Naive thymus-derived CD4-positive, alpha-beta T cell (primary cell): ENCODE measurements at regions of chr1 and their contacts with region 1.

Region 1: DNA sequence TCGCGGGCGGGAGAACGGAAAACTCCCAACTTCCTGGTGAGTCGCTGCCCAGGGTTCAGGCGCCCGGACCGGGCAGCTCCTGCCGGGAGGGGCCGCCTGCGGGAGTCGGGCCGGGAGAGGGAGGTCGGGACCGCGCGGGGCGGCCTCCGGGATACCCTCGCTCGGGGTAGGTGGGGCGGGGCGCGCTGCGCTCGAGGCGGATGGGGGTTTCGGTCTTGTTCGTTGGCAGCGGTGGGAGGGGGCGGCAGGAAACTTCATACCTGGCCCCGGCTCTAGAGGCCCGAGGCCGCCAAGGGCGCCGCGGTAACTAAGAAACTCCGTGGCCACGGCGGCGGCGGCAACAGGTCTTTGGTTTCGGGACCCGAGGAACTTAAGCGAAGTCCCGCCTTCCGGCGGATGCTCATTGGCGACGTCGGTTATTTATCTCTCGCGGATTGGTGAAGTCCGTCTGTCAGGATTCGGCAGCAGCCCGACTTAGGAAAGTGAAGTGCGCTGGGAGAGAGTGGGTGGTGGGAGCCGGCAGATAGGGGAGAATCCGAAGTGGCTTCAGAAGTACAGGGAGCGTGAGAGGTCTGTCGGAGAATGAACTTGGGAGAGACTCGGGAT is 546 bp downstream of the NEK7 start:
- DNase-seq: peak; percentile 63 to 81 (median 79)
- ATAC-seq: peak; percentile 65
- H3K4me3 ChIP-seq: peak overlapping the region; percentile 99
- H3K4me3 Mint-ChIP-seq: peak overlapping the region; percentile 97 to 100 (median 100)
- H3K27ac ChIP-seq: peak overlapping the region; percentile 96
- H3K27ac Mint-ChIP-seq: peak overlapping the region; percentile 97 to 100 (median 99)
- H3K4me1 ChIP-seq: peaks cover 28 to 33% of the 10 kb centered on the region in 2 donors
- H3K4me1 Mint-ChIP-seq: peaks cover 26 to 53% (median 48%) of the 10 kb centered on the region in 7 donors
- H3K27me3 ChIP-seq: no peaks in the 10 kb centered on the region
- H3K27me3 Mint-ChIP-seq: no peaks in the 10 kb centered on the region

Region 2: GRCh38 chr1:197391303-197392226 is 765.8 kb before region 1 on chr1:
- CTCF ChIA-PET with region 1: no interaction called
- POLR2A ChIA-PET with region 1: no interaction called
- intact Hi-C with region 1: loop called in 1 of 2 experiments (anchors 1 kb)
- DNase-seq: peak in 7 of 9 donors; percentile 63 to 89 (median 82)
- ATAC-seq: peak; percentile 95
- H3K4me3 ChIP-seq: no peak overlapping the region
- H3K4me3 Mint-ChIP-seq: peak overlapping the region in 9 of 10 donors; percentile 28 to 72 (median 68)
- H3K27ac ChIP-seq: peak overlapping the region; percentile 45
- H3K27ac Mint-ChIP-seq: peak overlapping the region; percentile 65 to 93 (median 88)
- H3K4me1 ChIP-seq: peaks cover 0 to 28% of the 10 kb centered on the region in 2 donors
- H3K4me1 Mint-ChIP-seq: peaks cover 18 to 56% (median 46%) of the 10 kb centered on the region in 7 donors
- H3K27me3 ChIP-seq: no peaks in the 10 kb centered on the region
- H3K27me3 Mint-ChIP-seq: peaks cover 0 to 20% (median 0%) of the 10 kb centered on the region in 5 donors

Region 3: GRCh38 chr1:197902454-197903195 is 254.7 kb before region 1 on chr1 and contains the start of gene C1orf53:
- CTCF ChIA-PET with region 1: no interaction called
- POLR2A ChIA-PET with region 1: interaction called, 4 read pairs
- intact Hi-C with region 1: loop called (anchors 1 to 2 kb)
- DNase-seq: peak; percentile 58 to 87 (median 74)
- ATAC-seq: peak; percentile 94
- H3K4me3 ChIP-seq: peak within 1 kb of the TSS; percentile 71
- H3K4me3 Mint-ChIP-seq: peak within 1 kb of the TSS; percentile 79 to 97 (median 92)
- H3K27ac ChIP-seq: peak within 1 kb of the TSS; percentile 50
- H3K27ac Mint-ChIP-seq: peak within 1 kb of the TSS; percentile 7 to 82 (median 79)
- H3K4me1 ChIP-seq: peaks cover 4% of the 10 kb centered on the region in 2 donors
- H3K4me1 Mint-ChIP-seq: peaks cover 6 to 19% (median 14%) of the 10 kb centered on the region in 7 donors
- H3K27me3 ChIP-seq: peaks cover 0 to 23% of the 10 kb centered on the region in 2 donors
- H3K27me3 Mint-ChIP-seq: peaks cover 46 to 68% (median 54%) of the 10 kb centered on the region in 5 donors
- total RNA-seq, gene C1orf53: not detected

Region 4: GRCh38 chr1:198167436-198167934 is 10.1 kb after region 1 on chr1:
- CTCF ChIA-PET with region 1: interaction called, 12 read pairs
- POLR2A ChIA-PET with region 1: interaction called, 150 read pairs
- intact Hi-C with region 1: loop called (anchors 1 kb)
- DNase-seq: peak in 7 of 9 donors; percentile 26 to 66 (median 42)
- ATAC-seq: peak; percentile 77
- H3K4me3 ChIP-seq: peak overlapping the region; percentile 54
- H3K4me3 Mint-ChIP-seq: peak overlapping the region; percentile 60 to 88 (median 78)
- H3K27ac ChIP-seq: peak overlapping the region; percentile 71
- H3K27ac Mint-ChIP-seq: peak overlapping the region; percentile 84 to 98 (median 95)
- H3K4me1 ChIP-seq: peaks cover 84 to 90% of the 10 kb centered on the region in 2 donors
- H3K4me1 Mint-ChIP-seq: peaks cover 55 to 96% (median 93%) of the 10 kb centered on the region in 7 donors
- H3K27me3 ChIP-seq: no peaks in the 10 kb centered on the region
- H3K27me3 Mint-ChIP-seq: no peaks in the 10 kb centered on the region

Region 5: GRCh38 chr1:198275597-198275996 is 118.3 kb after region 1 on chr1:
- CTCF ChIA-PET with region 1: interaction called, 3 read pairs
- POLR2A ChIA-PET with region 1: no interaction called
- intact Hi-C with region 1: loop called (anchors 1 to 5 kb)
- DNase-seq: peak in 1 of 9 donors; percentile 14
- ATAC-seq: no peak
- H3K4me3 ChIP-seq: no peak overlapping the region
- H3K4me3 Mint-ChIP-seq: no peak overlapping the region
- H3K27ac ChIP-seq: no peak overlapping the region
- H3K27ac Mint-ChIP-seq: no peak overlapping the region
- H3K4me1 ChIP-seq: no peaks in the 10 kb centered on the region
- H3K4me1 Mint-ChIP-seq: peaks cover 6 to 29% (median 14%) of the 10 kb centered on the region in 7 donors
- H3K27me3 ChIP-seq: no peaks in the 10 kb centered on the region
- H3K27me3 Mint-ChIP-seq: no peaks in the 10 kb centered on the region

Region 6: DNA sequence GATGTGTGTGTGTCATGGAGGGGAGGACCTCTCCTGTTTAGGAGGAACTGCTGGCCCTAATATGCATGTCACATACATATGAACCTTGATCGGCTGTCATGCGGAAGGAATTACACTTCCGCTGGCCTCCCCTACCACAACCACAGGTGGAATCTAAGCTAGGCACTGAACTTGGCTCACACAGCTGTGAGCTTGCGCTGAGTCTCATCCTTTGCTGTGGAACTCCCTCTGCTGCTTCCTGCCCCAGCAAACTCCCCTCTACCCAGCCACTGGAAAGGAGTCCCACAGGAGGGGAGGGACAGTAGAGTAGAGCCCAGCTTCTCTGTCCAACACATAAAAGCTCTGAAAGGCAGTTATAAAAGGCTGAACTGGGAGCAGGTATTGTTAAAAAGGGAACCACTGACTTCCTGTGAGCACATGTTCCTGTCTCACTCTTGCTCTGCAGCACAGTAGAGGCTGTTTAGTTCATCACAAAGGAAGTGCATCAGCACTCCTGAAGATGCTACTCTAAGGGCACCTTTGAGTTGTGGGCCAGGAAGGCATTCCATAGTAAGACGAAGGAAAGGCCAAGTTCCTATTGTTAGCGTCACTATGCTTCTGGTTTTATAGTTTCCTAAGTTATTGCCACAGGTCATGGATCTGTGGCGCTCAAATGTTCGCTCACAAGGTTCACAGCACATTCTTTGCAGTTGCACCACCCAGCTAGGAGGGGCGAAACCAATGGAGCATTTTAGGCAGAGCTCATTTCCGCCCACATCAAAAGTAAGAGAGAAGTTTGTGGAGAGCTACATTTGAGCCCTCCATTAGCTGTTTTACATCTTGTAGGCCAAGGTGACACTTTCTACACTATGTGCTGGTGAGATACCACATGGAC is 463.8 kb after region 1 on chr1:
- CTCF ChIA-PET with region 1: no interaction called
- POLR2A ChIA-PET with region 1: no interaction called
- intact Hi-C with region 1: loop called (anchors 1 to 5 kb)
- DNase-seq: peak; percentile 25 to 82 (median 76)
- ATAC-seq: peak; percentile 87
- H3K4me3 ChIP-seq: peak overlapping the region; percentile 48
- H3K4me3 Mint-ChIP-seq: peak overlapping the region; percentile 65 to 91 (median 84)
- H3K27ac ChIP-seq: peak overlapping the region; percentile 67
- H3K27ac Mint-ChIP-seq: peak overlapping the region; percentile 89 to 99 (median 96)
- H3K4me1 ChIP-seq: peaks cover 73 to 93% of the 10 kb centered on the region in 2 donors
- H3K4me1 Mint-ChIP-seq: peaks cover 58 to 98% (median 85%) of the 10 kb centered on the region in 7 donors
- H3K27me3 ChIP-seq: no peaks in the 10 kb centered on the region
- H3K27me3 Mint-ChIP-seq: no peaks in the 10 kb centered on the region